K562 (cell line): ENCODE measurements at regions of chr6 and their contacts with region 1.

Region 1: GRCh38 chr6:142566628-142567396 is 265.0 kb downstream of the ADGRG6 start:
- DNase-seq: peak; percentile 74 to 82 (median 77)
- ATAC-seq: peak; percentile 97
- H3K4me3 ChIP-seq: no peak overlapping the region
- H3K27ac ChIP-seq: no peak overlapping the region
- H3K4me1 ChIP-seq: no peaks in the 10 kb centered on the region
- H3K27me3 ChIP-seq: no peaks in the 10 kb centered on the region
- CTCF ChIP-seq: peak; percentile 74 to 89 (median 86)
- EP300 ChIP-seq: no peak
- POLR2A ChIP-seq: no peak
- RAD21 ChIP-seq: peak; percentile 62 to 77

Region 2: GRCh38 chr6:142294679-142295078 is 272.1 kb before region 1 on chr6:
- CTCF ChIA-PET with region 1: no interaction called
- POLR2A ChIA-PET with region 1: no interaction called
- in situ Hi-C with region 1: no loop called
- intact Hi-C with region 1: no loop called
- DNase-seq: no peak
- ATAC-seq: no peak
- H3K4me3 ChIP-seq: no peak overlapping the region
- H3K27ac ChIP-seq: no peak overlapping the region
- H3K4me1 ChIP-seq: no peaks in the 10 kb centered on the region
- H3K27me3 ChIP-seq: no peaks in the 10 kb centered on the region
- CTCF ChIP-seq: no peak
- EP300 ChIP-seq: no peak
- POLR2A ChIP-seq: no peak
- RAD21 ChIP-seq: no peak

Region 3: GRCh38 chr6:142679907-142680700 is 113.3 kb after region 1 on chr6:
- CTCF ChIA-PET with region 1: no interaction called
- POLR2A ChIA-PET with region 1: no interaction called
- in situ Hi-C with region 1: no loop called
- intact Hi-C with region 1: no loop called
- DNase-seq: no peak
- ATAC-seq: no peak
- H3K4me3 ChIP-seq: no peak overlapping the region
- H3K27ac ChIP-seq: no peak overlapping the region
- H3K4me1 ChIP-seq: no peaks in the 10 kb centered on the region
- H3K27me3 ChIP-seq: peaks cover 5 to 24% of the 10 kb centered on the region in 2 experiments; a peak in 4 of 5 replicates
- CTCF ChIP-seq: no peak
- EP300 ChIP-seq: no peak
- POLR2A ChIP-seq: no peak
- RAD21 ChIP-seq: no peak

Region 4: DNA sequence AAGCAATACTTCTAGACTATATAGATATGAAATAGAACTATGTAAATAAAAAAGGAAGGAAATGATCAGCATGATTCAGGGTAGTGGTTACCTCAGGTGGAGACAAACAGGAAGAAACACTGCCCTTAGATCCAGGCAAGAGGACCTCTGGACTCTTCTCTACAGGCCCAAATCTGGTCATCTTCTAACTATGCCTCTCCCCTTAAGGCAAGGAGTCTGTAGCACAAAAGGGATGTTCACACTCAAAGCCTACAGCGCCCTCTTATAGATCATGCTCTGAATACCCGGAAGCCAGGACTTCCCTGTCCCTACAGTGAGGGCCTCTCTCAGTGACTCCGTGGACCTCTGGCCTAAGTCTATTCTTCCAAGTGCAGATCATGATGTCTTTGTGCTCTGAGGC is 408.6 kb after region 1 on chr6:
- CTCF ChIA-PET with region 1: no interaction called
- POLR2A ChIA-PET with region 1: no interaction called
- in situ Hi-C with region 1: no loop called
- intact Hi-C with region 1: loop called (anchors 5 kb)
- DNase-seq: peak in 1 of 4 experiments; percentile 9
- ATAC-seq: peak; percentile 88
- H3K4me3 ChIP-seq: no peak overlapping the region
- H3K27ac ChIP-seq: no peak overlapping the region
- H3K4me1 ChIP-seq: no peaks in the 10 kb centered on the region
- H3K27me3 ChIP-seq: 0 out of 5 replicates have a peak, but pooled peaks cover 0 to 3% of the 10 kb centered on the region in 2 experiments
- CTCF ChIP-seq: peak in 1 of 3 experiments; percentile 8; a peak in 1 of 6 replicates
- EP300 ChIP-seq: no peak
- POLR2A ChIP-seq: no peak
- RAD21 ChIP-seq: peak in 1 of 2 experiments; percentile 32; a peak in 2 of 4 replicates

Region 5: GRCh38 chr6:143427109-143427817 is 860.5 kb after region 1 on chr6:
- CTCF ChIA-PET with region 1: interaction called, 5 read pairs
- POLR2A ChIA-PET with region 1: no interaction called
- in situ Hi-C with region 1: no loop called
- intact Hi-C with region 1: loop called (anchors 1 kb)
- DNase-seq: peak; percentile 67 to 80 (median 78)
- ATAC-seq: peak; percentile 100
- H3K4me3 ChIP-seq: no peak overlapping the region
- H3K27ac ChIP-seq: no peak overlapping the region
- H3K4me1 ChIP-seq: no peaks in the 10 kb centered on the region
- H3K27me3 ChIP-seq: no peaks in the 10 kb centered on the region
- CTCF ChIP-seq: peak; percentile 86 to 98 (median 94)
- EP300 ChIP-seq: no peak
- POLR2A ChIP-seq: peak; percentile 46
- RAD21 ChIP-seq: peak; percentile 93 to 97